ENCODE measurements at regions of chr19 and their contacts with region 1.

Region 1: GRCh38 chr19:29610563-29611271 is 4.6 kb downstream of the POP4 start:
- DNase-seq: peak; percentile 81 to 85 (median 82)
- H3K4me3 ChIP-seq: no peak overlapping the region
- H3K4me3 Mint-ChIP-seq: no peak overlapping the region
- H3K27ac ChIP-seq: no peak overlapping the region
- H3K27ac Mint-ChIP-seq: peak overlapping the region; percentile 1 to 90 (median 83)
- H3K4me1 ChIP-seq: peaks cover 22% of the 10 kb centered on the region
- H3K4me1 Mint-ChIP-seq: peaks cover 14 to 45% (median 28%) of the 10 kb centered on the region in 4 donors
- H3K27me3 ChIP-seq: no peaks in the 10 kb centered on the region
- H3K27me3 Mint-ChIP-seq: no peaks in the 10 kb centered on the region

Region 2: GRCh38 chr19:29212648-29213573 is 397.8 kb before region 1 on chr19 and contains the start of gene UQCRFS1:
- CTCF ChIA-PET with region 1: no interaction called
- POLR2A ChIA-PET with region 1: interaction called, 3 read pairs
- intact Hi-C with region 1: loop called (anchors 5 kb)
- DNase-seq: peak; percentile 93 to 96 (median 95)
- H3K4me3 ChIP-seq: peak within 1 kb of the TSS; percentile 75 to 82
- H3K4me3 Mint-ChIP-seq: peak within 1 kb of the TSS; percentile 93 to 99 (median 98)
- H3K27ac ChIP-seq: peak within 1 kb of the TSS; percentile 88
- H3K27ac Mint-ChIP-seq: peak within 1 kb of the TSS; percentile 94 to 99 (median 99)
- H3K4me1 ChIP-seq: peaks cover 36% of the 10 kb centered on the region
- H3K4me1 Mint-ChIP-seq: peaks cover 34 to 50% (median 42%) of the 10 kb centered on the region in 4 donors
- H3K27me3 ChIP-seq: no peaks in the 10 kb centered on the region
- H3K27me3 Mint-ChIP-seq: peaks cover 1 to 10% of the 10 kb centered on the region in 2 donors
- total RNA-seq, gene UQCRFS1: 16.2 to 17.6 TPM

Region 3: GRCh38 chr19:29520390-29520789 is 90.3 kb before region 1 on chr19:
- CTCF ChIA-PET with region 1: no interaction called
- POLR2A ChIA-PET with region 1: no interaction called
- intact Hi-C with region 1: no loop called
- DNase-seq: no peak
- H3K4me3 ChIP-seq: no peak overlapping the region
- H3K4me3 Mint-ChIP-seq: no peak overlapping the region
- H3K27ac ChIP-seq: no peak overlapping the region
- H3K27ac Mint-ChIP-seq: no peak overlapping the region
- H3K4me1 ChIP-seq: no peaks in the 10 kb centered on the region
- H3K4me1 Mint-ChIP-seq: peaks cover 2 to 9% (median 5%) of the 10 kb centered on the region in 4 donors
- H3K27me3 ChIP-seq: no peaks in the 10 kb centered on the region
- H3K27me3 Mint-ChIP-seq: peaks cover 32 to 40% of the 10 kb centered on the region in 2 donors

Region 4: GRCh38 chr19:29622138-29623070 is 11.7 kb after region 1 on chr19:
- CTCF ChIA-PET with region 1: interaction called, 88 read pairs
- POLR2A ChIA-PET with region 1: interaction called, 30 read pairs
- intact Hi-C with region 1: no loop called
- DNase-seq: peak; percentile 22 to 55 (median 36)
- H3K4me3 ChIP-seq: no peak overlapping the region
- H3K4me3 Mint-ChIP-seq: peak overlapping the region in 7 of 8 donors; percentile 19 to 85 (median 71)
- H3K27ac ChIP-seq: peak overlapping the region; percentile 35
- H3K27ac Mint-ChIP-seq: peak overlapping the region; percentile 73 to 94 (median 91)
- H3K4me1 ChIP-seq: peaks cover 52% of the 10 kb centered on the region
- H3K4me1 Mint-ChIP-seq: peaks cover 40 to 56% (median 47%) of the 10 kb centered on the region in 4 donors
- H3K27me3 ChIP-seq: no peaks in the 10 kb centered on the region
- H3K27me3 Mint-ChIP-seq: no peaks in the 10 kb centered on the region

Region 5: DNA sequence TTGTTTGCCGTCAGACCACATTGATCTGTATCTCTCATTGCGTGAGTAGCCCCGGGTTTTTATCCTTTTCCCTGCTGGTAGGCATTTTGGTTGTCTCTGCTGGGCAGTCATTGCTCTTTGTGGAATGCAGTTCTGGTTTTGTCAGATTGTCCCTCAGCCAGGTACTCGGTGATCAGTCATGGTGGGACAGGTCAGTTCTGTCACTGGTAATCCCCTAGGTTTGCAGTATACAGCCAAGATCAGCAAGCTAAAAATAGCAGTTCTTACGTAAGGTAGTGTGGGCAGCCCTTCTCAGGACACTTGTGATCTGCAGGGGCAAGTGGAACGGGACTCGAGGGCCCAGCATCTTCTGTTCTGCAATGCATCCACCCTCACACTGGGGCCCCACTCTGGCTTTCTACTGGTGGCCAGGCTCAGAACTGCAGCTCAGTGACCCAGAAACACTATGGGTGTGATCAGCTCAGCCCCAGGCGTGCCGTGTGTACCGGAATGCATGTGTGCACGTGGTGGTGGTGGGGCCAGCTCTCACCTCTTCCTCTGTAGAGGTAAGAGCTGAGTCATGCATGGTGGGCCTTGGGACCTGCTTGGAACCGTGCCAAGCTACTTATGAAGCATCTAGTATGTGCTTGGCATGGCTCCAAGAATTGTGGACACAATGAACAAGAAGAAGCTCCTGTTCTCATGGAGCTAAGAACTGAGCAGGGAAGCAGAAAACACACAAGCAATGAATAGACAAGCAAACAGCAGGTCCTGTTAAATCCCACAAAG is 60.9 kb after region 1 on chr19:
- CTCF ChIA-PET with region 1: interaction called, 154 read pairs
- POLR2A ChIA-PET with region 1: interaction called, 163 read pairs
- intact Hi-C with region 1: loop called (anchors 1 kb)
- DNase-seq: peak; percentile 81 to 96 (median 86)
- H3K4me3 ChIP-seq: peak overlapping the region; percentile 14 to 46
- H3K4me3 Mint-ChIP-seq: peak overlapping the region; percentile 62 to 96 (median 76)
- H3K27ac ChIP-seq: peak overlapping the region; percentile 92
- H3K27ac Mint-ChIP-seq: peak overlapping the region; percentile 93 to 100 (median 98)
- H3K4me1 ChIP-seq: peaks cover 97% of the 10 kb centered on the region
- H3K4me1 Mint-ChIP-seq: peaks cover 58 to 96% (median 79%) of the 10 kb centered on the region in 4 donors
- H3K27me3 ChIP-seq: no peaks in the 10 kb centered on the region
- H3K27me3 Mint-ChIP-seq: no peaks in the 10 kb centered on the region

Region 6: DNA sequence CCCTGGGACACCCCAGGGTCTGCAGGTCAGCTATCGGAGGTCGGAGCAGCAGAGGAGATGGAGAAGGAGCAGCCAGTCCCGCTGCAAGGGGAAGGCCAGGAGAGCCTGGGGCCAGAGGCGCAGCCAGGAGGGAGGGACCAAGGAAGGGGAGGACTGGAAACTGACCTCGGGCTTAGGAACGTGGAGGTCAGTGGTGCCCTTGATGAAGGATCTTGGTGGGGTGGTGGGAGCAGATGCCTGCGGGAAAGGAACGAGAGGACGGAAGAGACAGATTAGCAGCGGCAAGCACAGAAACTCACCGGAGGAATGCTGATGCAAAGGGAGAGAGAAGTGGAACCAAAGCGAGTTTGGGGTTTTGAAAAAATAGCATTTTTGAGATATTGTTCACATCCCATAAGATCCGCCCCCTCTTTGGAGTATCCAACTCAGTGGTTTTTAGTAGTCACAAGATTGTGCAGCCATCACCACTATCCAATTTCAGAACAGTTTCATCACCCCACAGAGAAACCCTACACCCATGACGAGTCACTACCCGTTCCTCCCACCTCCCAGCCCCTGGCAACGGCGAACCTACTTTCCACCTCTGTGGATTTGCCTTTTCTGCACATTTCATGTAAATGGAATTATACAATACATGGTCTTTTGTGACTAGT is 76.7 kb after region 1 on chr19:
- CTCF ChIA-PET with region 1: interaction called, 256 read pairs
- POLR2A ChIA-PET with region 1: interaction called, 23 read pairs
- intact Hi-C with region 1: loop called (anchors 1 kb)
- DNase-seq: no peak
- H3K4me3 ChIP-seq: no peak overlapping the region
- H3K4me3 Mint-ChIP-seq: no peak overlapping the region
- H3K27ac ChIP-seq: no peak overlapping the region
- H3K27ac Mint-ChIP-seq: peak overlapping the region in 1 of 7 donors; percentile 77
- H3K4me1 ChIP-seq: peaks cover 13% of the 10 kb centered on the region
- H3K4me1 Mint-ChIP-seq: peaks cover 20 to 59% (median 44%) of the 10 kb centered on the region in 4 donors
- H3K27me3 ChIP-seq: no peaks in the 10 kb centered on the region
- H3K27me3 Mint-ChIP-seq: no peaks in the 10 kb centered on the region

Region 7: GRCh38 chr19:29714953-29715700 is 104.4 kb after region 1 on chr19 and contains the start of gene C19orf12:
- CTCF ChIA-PET with region 1: interaction called, 267 read pairs
- POLR2A ChIA-PET with region 1: interaction called, 151 read pairs
- intact Hi-C with region 1: loop called (anchors 1 kb)
- DNase-seq: peak in 4 of 5 donors; percentile 53 to 86 (median 80)
- H3K4me3 ChIP-seq: peak within 1 kb of the TSS; percentile 80 to 84
- H3K4me3 Mint-ChIP-seq: peak within 1 kb of the TSS; percentile 88 to 95 (median 92)
- H3K27ac ChIP-seq: peak within 1 kb of the TSS; percentile 88
- H3K27ac Mint-ChIP-seq: peak within 1 kb of the TSS; percentile 95 to 98 (median 98)
- H3K4me1 ChIP-seq: peaks cover 56% of the 10 kb centered on the region
- H3K4me1 Mint-ChIP-seq: peaks cover 41 to 60% (median 52%) of the 10 kb centered on the region in 4 donors
- H3K27me3 ChIP-seq: no peaks in the 10 kb centered on the region
- H3K27me3 Mint-ChIP-seq: no peaks in the 10 kb centered on the region
- total RNA-seq, gene C19orf12: 29.3 to 30.1 TPM

Region 8: GRCh38 chr19:29737461-29738000 is 126.8 kb after region 1 on chr19:
- CTCF ChIA-PET with region 1: no interaction called
- POLR2A ChIA-PET with region 1: no interaction called
- intact Hi-C with region 1: no loop called
- DNase-seq: no peak
- H3K4me3 ChIP-seq: no peak overlapping the region
- H3K4me3 Mint-ChIP-seq: no peak overlapping the region
- H3K27ac ChIP-seq: no peak overlapping the region
- H3K27ac Mint-ChIP-seq: no peak overlapping the region
- H3K4me1 ChIP-seq: no peaks in the 10 kb centered on the region
- H3K4me1 Mint-ChIP-seq: no peaks in the 10 kb centered on the region
- H3K27me3 ChIP-seq: no peaks in the 10 kb centered on the region
- H3K27me3 Mint-ChIP-seq: peaks cover 2 to 10% of the 10 kb centered on the region in 2 donors

Region 9: DNA sequence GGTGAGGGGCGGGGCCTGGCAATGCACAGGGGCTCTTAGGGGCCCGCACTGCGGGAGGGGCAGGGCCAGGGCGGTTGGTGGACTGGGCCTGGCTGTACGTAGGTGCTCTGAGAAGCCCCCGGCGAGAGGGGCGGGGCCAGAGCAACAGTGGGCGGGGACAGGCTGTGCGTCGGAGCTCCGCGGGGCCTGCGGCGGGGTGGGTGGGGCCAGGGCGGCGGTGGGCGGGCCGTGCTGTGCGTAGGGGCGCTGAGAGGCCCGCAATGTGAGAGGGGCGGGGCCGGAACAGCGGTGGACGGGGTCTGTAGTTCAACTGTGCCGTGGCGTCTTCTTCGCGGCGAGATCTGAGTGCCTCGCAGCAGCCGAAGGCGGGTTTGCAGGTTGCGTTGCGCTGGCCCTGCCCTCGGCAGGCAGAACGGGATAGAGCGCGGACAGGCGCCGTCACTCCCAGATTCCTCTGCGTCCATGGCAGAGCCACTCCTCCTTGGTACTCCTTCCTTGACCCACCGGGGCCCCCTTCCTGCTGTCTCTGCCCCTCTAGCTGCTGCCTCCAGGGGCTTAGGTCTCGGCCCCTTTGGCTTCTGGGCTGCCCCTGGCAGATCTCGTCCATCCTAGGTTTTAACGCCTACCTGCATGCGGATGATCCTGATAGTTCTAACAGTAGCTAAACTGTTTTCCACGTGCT is 234.3 kb after region 1 on chr19:
- CTCF ChIA-PET with region 1: no interaction called
- POLR2A ChIA-PET with region 1: interaction called, 24 read pairs
- intact Hi-C with region 1: loop called (anchors 1 kb)
- DNase-seq: peak in 4 of 5 donors; percentile 94 to 96 (median 96)
- H3K4me3 ChIP-seq: peak overlapping the region; percentile 67 to 71
- H3K4me3 Mint-ChIP-seq: peak overlapping the region; percentile 88 to 98 (median 94)
- H3K27ac ChIP-seq: peak overlapping the region; percentile 63
- H3K27ac Mint-ChIP-seq: peak overlapping the region; percentile 81 to 98 (median 95)
- H3K4me1 ChIP-seq: peaks cover 21% of the 10 kb centered on the region
- H3K4me1 Mint-ChIP-seq: peaks cover 7 to 24% (median 12%) of the 10 kb centered on the region in 4 donors
- H3K27me3 ChIP-seq: no peaks in the 10 kb centered on the region
- H3K27me3 Mint-ChIP-seq: peaks cover 0 to 1% of the 10 kb centered on the region in 2 donors